ENCODE measurements at regions of chr1 and their contacts with region 1.

Region 1: GRCh38 chr1:27332536-27333281 is 9.1 kb upstream of the SYTL1 start:
- DNase-seq: peak in 1 of 2 experiments; percentile 86
- H3K4me3 ChIP-seq: no peak overlapping the region
- H3K27ac ChIP-seq: no peak overlapping the region
- H3K4me1 ChIP-seq: no peaks in the 10 kb centered on the region
- H3K27me3 ChIP-seq: no peaks in the 10 kb centered on the region
- CTCF ChIP-seq: peak; percentile 89 to 97 (median 95)
- EP300 ChIP-seq: no peak
- POLR2A ChIP-seq: no peak
- RAD21 ChIP-seq: peak; percentile 64 to 75

Region 2: DNA sequence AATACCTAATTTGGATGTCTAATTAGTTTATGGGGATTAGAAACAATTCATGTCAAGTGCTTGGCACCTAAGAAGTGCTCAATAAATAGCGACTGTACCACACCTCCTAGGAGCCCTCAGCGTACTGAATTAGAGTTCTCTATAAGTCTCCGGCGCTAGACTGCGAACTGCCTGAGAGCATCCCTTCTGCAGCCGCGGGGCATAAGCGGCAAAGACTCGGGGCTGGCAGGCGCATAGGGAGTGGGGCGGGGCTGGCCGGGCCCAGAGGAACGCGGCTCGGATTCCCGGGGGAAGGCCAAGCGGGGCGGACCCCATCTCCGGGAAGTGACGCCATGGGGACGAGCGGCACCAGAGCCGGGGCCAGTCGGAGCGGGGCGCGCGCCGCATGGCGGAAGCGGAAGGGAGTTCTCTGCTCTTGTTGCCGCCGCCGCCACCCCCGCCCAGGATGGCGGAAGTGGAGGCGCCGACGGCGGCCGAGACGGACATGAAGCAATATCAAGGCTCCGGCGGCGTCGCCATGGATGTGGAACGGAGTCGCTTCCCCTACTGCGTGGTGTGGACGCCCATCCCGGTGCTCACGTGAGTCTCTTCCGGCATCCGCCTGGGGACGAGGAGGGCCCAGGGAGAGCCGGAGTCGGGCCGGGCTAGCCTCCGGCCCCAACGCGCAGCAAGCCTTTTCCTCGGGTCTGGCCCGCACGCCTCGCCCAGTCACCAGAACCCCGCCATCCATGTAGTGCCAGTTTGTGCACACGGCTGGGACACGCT is 10.7 kb before region 1 on chr1 and contains the start of gene TMEM222:
- CTCF ChIA-PET with region 1: interaction called, 32 read pairs
- POLR2A ChIA-PET with region 1: interaction called, 12 read pairs
- DNase-seq: peak; percentile 88 to 99
- H3K4me3 ChIP-seq: peak within 1 kb of the TSS; percentile 78 to 100 (median 98)
- H3K27ac ChIP-seq: peak within 1 kb of the TSS; percentile 86
- H3K4me1 ChIP-seq: 0 out of 7 replicates have a peak, but pooled peaks cover 0 to 8% (median 0%) of the 10 kb centered on the region in 4 experiments
- H3K27me3 ChIP-seq: no peaks in the 10 kb centered on the region; a peak in 2 of 7 replicates
- CTCF ChIP-seq: peak in 2 of 3 experiments; percentile 1 to 14; a peak in 2 of 4 replicates
- EP300 ChIP-seq: peak; percentile 16 to 83; a peak in 2 of 3 replicates
- POLR2A ChIP-seq: peak; percentile 69 to 87
- RAD21 ChIP-seq: peak; percentile 7 to 30; a peak in 3 of 4 replicates
- total RNA-seq, gene TMEM222: 25.1 and 27.0 TPM in 2 replicates

Region 3: DNA sequence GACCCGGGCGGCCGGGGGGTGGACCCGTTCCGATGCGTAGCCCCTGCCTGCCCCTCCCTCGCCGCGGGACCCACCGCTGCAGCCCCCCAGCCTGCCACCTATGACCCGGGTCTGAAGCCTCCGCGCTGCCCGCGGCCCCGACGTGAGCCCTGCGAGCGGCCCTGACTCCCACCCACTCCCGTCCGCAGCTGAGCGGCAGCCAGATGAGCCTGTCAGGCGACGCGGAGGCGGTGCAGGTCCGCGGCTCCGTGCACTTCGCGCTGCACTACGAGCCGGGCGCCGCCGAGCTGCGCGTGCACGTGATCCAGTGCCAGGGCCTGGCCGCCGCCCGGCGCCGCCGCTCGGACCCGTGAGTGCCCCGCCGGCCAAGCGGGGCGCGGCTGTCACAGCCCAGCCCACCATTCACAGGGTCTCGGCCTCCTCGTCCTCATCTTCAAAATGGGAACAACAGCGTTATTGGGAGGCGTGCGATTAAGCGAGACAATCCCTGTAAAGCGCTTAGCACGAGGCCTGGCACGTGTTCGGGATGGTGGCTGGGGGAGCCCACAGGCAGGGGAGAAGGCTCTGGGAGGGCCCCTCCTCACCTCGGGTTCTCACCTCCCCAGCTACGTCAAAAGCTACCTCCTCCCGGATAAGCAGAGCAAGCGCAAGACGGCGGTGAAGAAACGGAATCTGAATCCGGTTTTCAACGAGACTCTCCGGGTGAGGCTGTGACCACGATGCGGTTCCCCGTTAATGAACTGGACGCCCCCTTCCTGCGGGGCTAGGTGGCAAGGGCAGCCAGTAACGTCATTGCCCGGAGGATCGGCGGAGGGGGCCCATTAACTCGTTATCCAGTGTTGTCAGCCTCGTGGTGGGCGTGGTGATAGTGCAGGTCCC is 17.3 kb after region 1 on chr1:
- CTCF ChIA-PET with region 1: interaction called, 75 read pairs
- POLR2A ChIA-PET with region 1: interaction called, 50 read pairs
- DNase-seq: peak in 1 of 2 experiments; percentile 83
- H3K4me3 ChIP-seq: peak overlapping the region; percentile 47 to 63 (median 51)
- H3K27ac ChIP-seq: no peak overlapping the region
- H3K4me1 ChIP-seq: peaks cover 0 to 20% (median 8%) of the 10 kb centered on the region in 4 experiments; a peak in 6 of 7 replicates
- H3K27me3 ChIP-seq: peaks cover 0 to 8% (median 6%) of the 10 kb centered on the region in 4 experiments; a peak in 5 of 7 replicates
- CTCF ChIP-seq: no peak
- EP300 ChIP-seq: no peak; a peak in 1 of 3 replicates
- POLR2A ChIP-seq: 0 out of 3 replicates have a peak, but pooled peaks of 1 of the 2 experiments have one; percentile 24
- RAD21 ChIP-seq: no peak

Region 4: GRCh38 chr1:27357281-27358037 is 24.8 kb after region 1 on chr1:
- CTCF ChIA-PET with region 1: interaction called, 66 read pairs
- POLR2A ChIA-PET with region 1: interaction called, 50 read pairs
- DNase-seq: peak; percentile 73 to 94
- H3K4me3 ChIP-seq: peak overlapping the region in 3 of 4 experiments; percentile 13 to 34 (median 28); a peak in 4 of 8 replicates
- H3K27ac ChIP-seq: no peak overlapping the region
- H3K4me1 ChIP-seq: peaks cover 0 to 14% (median 7%) of the 10 kb centered on the region in 4 experiments; a peak in 6 of 7 replicates
- H3K27me3 ChIP-seq: peaks cover 12 to 47% (median 36%) of the 10 kb centered on the region in 4 experiments
- CTCF ChIP-seq: peak in 2 of 3 experiments; percentile 94 to 98; a peak in 3 of 4 replicates
- EP300 ChIP-seq: no peak; a peak in 1 of 3 replicates
- POLR2A ChIP-seq: no peak
- RAD21 ChIP-seq: peak; percentile 60 to 71

Region 5: GRCh38 chr1:27365372-27366112 is 32.8 kb after region 1 on chr1:
- CTCF ChIA-PET with region 1: interaction called, 37 read pairs
- POLR2A ChIA-PET with region 1: interaction called, 3 read pairs
- DNase-seq: peak in 1 of 2 experiments; percentile 86
- H3K4me3 ChIP-seq: peak overlapping the region; percentile 62 to 71 (median 64)
- H3K27ac ChIP-seq: no peak overlapping the region
- H3K4me1 ChIP-seq: peaks cover 6 to 20% (median 8%) of the 10 kb centered on the region in 4 experiments
- H3K27me3 ChIP-seq: peaks cover 5 to 15% (median 11%) of the 10 kb centered on the region in 4 experiments; a peak in 6 of 7 replicates
- CTCF ChIP-seq: no peak
- EP300 ChIP-seq: peak in 1 of 2 experiments; percentile 98; a peak in 1 of 3 replicates
- POLR2A ChIP-seq: peak in 1 of 2 experiments; percentile 51; a peak in 2 of 3 replicates
- RAD21 ChIP-seq: no peak

Region 6: GRCh38 chr1:27383039-27383605 is 50.4 kb after region 1 on chr1 and contains the start of gene CD164L2:
- CTCF ChIA-PET with region 1: interaction called, 37 read pairs
- POLR2A ChIA-PET with region 1: no interaction called
- DNase-seq: peak in 1 of 2 experiments; percentile 100
- H3K4me3 ChIP-seq: peak within 1 kb of the TSS; percentile 36 to 74 (median 52)
- H3K27ac ChIP-seq: no peak within 1 kb of the TSS
- H3K4me1 ChIP-seq: peaks cover 0 to 7% (median under 1%) of the 10 kb centered on the region in 4 experiments; a peak in 3 of 7 replicates
- H3K27me3 ChIP-seq: peaks cover 0 to 16% (median 9%) of the 10 kb centered on the region in 4 experiments; a peak in 6 of 7 replicates
- CTCF ChIP-seq: no peak
- EP300 ChIP-seq: no peak
- POLR2A ChIP-seq: peak in 1 of 2 experiments; percentile 54; a peak in 1 of 3 replicates
- RAD21 ChIP-seq: no peak
- total RNA-seq, gene CD164L2: 3.3 and 3.8 TPM in 2 replicates

Region 7: DNA sequence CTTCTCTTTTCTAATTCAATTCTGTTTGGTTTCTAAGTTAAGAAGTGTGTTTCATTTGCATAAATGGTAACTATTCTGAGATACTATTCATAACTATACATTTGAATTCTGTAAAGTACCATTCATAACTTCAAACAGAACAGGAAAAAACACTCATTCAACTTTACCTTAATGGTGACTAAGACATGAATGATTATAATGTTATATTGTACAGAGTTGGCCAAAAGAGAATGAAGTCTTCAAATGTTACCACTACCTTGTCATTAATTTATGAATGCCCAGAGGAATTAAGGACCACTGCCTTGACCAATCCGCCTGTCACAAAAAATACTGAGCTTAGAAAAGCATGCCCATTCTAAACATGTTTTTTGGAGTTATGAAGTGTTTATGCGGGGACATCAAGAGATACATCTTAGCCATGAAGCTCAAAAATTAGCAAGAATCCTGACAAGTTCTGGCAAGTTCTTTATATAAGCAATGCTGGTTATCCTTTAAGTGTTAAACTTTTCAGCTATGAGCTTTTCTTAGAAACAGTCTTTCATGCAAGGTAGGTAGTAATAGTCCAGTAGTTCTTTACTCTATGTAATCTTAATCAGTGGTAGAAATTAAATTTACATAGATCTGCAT is 149.4 kb after region 1 on chr1:
- CTCF ChIA-PET with region 1: no interaction called
- POLR2A ChIA-PET with region 1: no interaction called
- DNase-seq: no peak
- H3K4me3 ChIP-seq: no peak overlapping the region
- H3K27ac ChIP-seq: no peak overlapping the region
- H3K4me1 ChIP-seq: no peaks in the 10 kb centered on the region
- H3K27me3 ChIP-seq: no peaks in the 10 kb centered on the region
- CTCF ChIP-seq: no peak
- EP300 ChIP-seq: no peak
- POLR2A ChIP-seq: no peak
- RAD21 ChIP-seq: no peak